Caco-2 (cell line): ENCODE measurements at regions of chr4 and their contacts with region 1.

Region 1: DNA sequence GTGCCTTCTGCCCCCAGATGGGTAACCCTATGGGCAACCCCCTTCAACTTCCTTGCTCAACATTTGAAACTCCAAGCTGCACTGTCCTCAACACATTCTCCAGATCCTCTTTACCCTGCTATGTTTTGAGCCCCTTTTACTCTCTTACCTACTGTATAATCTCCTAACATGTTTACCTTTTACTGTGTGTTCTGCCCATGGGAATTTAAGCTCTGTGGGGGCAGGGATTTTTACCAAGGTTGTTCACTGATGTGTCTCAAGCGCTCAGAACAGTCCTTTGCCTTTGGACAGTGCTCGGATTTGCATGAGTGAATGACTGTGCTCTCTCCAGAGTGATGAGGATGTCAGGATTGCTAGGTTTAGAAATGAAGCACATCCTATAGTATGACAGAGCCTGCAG is 53.2 kb downstream of the SORBS2 start:
- DNase-seq: no peak
- H3K4me3 ChIP-seq: no peak overlapping the region
- H3K4me3 Mint-ChIP-seq: no peak overlapping the region
- H3K27ac Mint-ChIP-seq: no peak overlapping the region
- H3K4me1 ChIP-seq: peaks cover 14% of the 10 kb centered on the region
- H3K4me1 Mint-ChIP-seq: peaks cover 24% of the 10 kb centered on the region
- H3K27me3 ChIP-seq: no peaks in the 10 kb centered on the region
- H3K27me3 Mint-ChIP-seq: no peaks in the 10 kb centered on the region
- CTCF ChIP-seq: no peak

Region 2: DNA sequence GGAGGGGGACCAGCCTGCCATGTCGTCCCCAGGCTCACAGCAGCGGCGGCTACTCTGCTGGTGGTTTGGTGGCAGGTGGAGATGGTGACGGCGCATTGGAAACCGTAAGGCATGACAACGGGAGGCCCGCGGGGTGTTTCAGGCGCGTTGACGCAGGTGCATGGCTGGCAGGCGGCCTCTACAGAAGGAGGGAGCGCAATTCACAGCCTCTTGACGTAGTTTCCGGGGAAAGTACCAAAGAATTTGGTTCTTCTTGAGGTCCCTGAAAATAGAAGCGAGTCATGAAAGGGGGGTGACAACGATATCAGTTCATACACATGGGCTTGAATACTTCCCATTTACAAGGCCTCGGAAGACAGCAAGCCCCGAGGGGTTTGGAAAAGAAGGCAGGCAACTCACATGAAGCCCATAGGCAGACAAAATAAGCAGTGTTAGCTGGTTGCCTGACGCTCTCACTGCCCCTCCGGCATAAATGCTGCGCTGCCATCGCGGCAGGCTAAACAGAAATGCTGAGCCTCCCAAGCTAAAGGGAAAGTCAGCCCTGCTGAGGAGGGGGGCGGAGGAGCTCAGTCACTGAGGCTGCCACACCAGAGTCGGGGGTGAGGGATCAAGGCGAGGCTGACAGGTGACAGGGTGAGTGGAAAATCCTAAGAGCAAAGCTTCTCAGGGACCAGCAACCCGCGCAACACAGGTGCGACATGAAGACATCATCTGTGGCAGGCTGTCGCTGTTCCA is 171.2 kb before region 1 on chr4:
- CTCF ChIA-PET with region 1: no interaction called
- POLR2A ChIA-PET with region 1: no interaction called
- intact Hi-C with region 1: no loop called
- DNase-seq: no peak
- H3K4me3 ChIP-seq: no peak overlapping the region
- H3K4me3 Mint-ChIP-seq: no peak overlapping the region
- H3K27ac Mint-ChIP-seq: no peak overlapping the region
- H3K4me1 ChIP-seq: no peaks in the 10 kb centered on the region
- H3K4me1 Mint-ChIP-seq: no peaks in the 10 kb centered on the region
- H3K27me3 ChIP-seq: no peaks in the 10 kb centered on the region
- H3K27me3 Mint-ChIP-seq: no peaks in the 10 kb centered on the region
- CTCF ChIP-seq: no peak

Region 3: GRCh38 chr4:185896823-185897488 is 138.1 kb after region 1 on chr4:
- CTCF ChIA-PET with region 1: no interaction called
- POLR2A ChIA-PET with region 1: no interaction called
- intact Hi-C with region 1: loop called (anchors 1 kb)
- DNase-seq: peak; percentile 32 to 63
- H3K4me3 ChIP-seq: no peak overlapping the region
- H3K4me3 Mint-ChIP-seq: peak overlapping the region; percentile 52
- H3K27ac Mint-ChIP-seq: peak overlapping the region; percentile 69
- H3K4me1 ChIP-seq: peaks cover 8% of the 10 kb centered on the region; the same call in 1 of the 2 replicates
- H3K4me1 Mint-ChIP-seq: peaks cover 7% of the 10 kb centered on the region
- H3K27me3 ChIP-seq: no peaks in the 10 kb centered on the region
- H3K27me3 Mint-ChIP-seq: no peaks in the 10 kb centered on the region
- CTCF ChIP-seq: no peak